Activated CD4-positive, alpha-beta T cell treated with anti-CD3 and anti-CD28 coated beads, Interleukin-2, amount 10 ng/mL, durations not matched to agents 24 days and 14 days (primary cell): ENCODE measurements at regions of chr6 and their contacts with region 1.

Region 1: DNA sequence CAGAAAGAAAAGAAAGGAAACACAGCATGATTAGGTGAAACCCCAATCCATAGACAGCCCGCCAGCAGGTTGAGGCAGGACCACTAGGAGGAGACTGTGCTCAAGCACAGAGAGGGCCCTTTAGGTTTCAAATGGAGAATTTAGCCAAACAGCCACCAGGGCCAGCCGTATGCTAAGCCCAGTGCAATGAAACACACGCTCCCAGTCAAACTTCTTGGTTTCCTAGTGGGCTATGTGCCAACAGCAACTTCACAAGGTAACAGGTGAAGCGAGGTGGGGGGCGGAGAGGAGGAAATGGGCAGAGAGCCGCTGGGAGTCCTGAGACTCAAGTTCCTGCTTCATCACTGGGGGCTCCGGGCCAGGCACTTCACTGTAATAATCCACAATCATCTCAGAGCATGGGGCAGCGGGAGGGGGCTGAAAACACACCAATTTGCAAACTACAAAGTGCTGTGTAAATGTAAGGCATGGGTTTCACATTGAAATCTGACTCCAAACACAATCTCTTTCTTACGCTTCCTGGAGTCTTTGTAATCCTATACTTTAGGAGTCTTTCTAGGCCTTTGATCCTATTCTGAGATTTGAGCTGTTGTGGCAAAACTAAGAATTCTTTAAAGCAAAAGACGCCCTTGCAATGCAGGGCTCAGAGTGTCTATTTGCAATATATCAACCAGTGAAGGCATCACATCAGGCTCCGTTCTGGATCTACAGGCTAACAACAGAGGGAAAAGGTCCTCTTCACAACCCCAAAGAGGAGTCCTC is 117.3 kb downstream of the OPRM1 start:
- DNase-seq: peak; percentile 85
- H3K4me3 Mint-ChIP-seq: peak overlapping the region; percentile 67
- H3K27ac Mint-ChIP-seq: peak overlapping the region; percentile 65
- H3K4me1 Mint-ChIP-seq: peaks cover 25% of the 10 kb centered on the region
- H3K27me3 Mint-ChIP-seq: no peaks in the 10 kb centered on the region

Region 2: DNA sequence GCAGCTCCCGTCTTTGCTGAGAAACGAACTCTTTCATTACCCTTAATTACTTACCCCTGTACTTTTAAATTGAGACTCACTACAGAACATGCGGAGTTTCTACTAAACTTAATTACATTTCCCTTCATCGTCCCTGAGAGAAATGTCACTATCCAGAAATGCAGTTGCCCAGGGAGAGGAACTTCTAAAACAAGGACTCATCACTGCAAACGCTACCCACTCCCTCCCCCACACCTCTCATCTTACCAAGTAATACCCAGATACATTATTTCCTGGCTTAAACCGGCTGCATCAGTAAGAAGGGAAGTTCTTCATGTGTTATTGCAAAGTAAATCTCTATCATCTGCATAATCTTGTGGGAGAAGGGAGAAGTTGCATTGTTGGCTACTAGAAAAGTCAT is 62.0 kb after region 1 on chr6:
- intact Hi-C with region 1: no loop called
- DNase-seq: no peak
- H3K4me3 Mint-ChIP-seq: no peak overlapping the region
- H3K27ac Mint-ChIP-seq: no peak overlapping the region
- H3K4me1 Mint-ChIP-seq: peaks cover 15% of the 10 kb centered on the region
- H3K27me3 Mint-ChIP-seq: peaks cover 4% of the 10 kb centered on the region

Region 3: GRCh38 chr6:154352898-154353585 is 196.7 kb after region 1 on chr6:
- intact Hi-C with region 1: loop called (anchors 5 kb)
- DNase-seq: no peak
- H3K4me3 Mint-ChIP-seq: no peak overlapping the region
- H3K27ac Mint-ChIP-seq: no peak overlapping the region
- H3K4me1 Mint-ChIP-seq: peaks cover 14% of the 10 kb centered on the region
- H3K27me3 Mint-ChIP-seq: peaks cover 33% of the 10 kb centered on the region

Region 4: GRCh38 chr6:154410619-154411072 is 254.3 kb after region 1 on chr6:
- intact Hi-C with region 1: loop called (anchors 2 kb)
- DNase-seq: no peak
- H3K4me3 Mint-ChIP-seq: no peak overlapping the region
- H3K27ac Mint-ChIP-seq: no peak overlapping the region
- H3K4me1 Mint-ChIP-seq: peaks cover 1% of the 10 kb centered on the region
- H3K27me3 Mint-ChIP-seq: peaks cover 4% of the 10 kb centered on the region

Region 5: DNA sequence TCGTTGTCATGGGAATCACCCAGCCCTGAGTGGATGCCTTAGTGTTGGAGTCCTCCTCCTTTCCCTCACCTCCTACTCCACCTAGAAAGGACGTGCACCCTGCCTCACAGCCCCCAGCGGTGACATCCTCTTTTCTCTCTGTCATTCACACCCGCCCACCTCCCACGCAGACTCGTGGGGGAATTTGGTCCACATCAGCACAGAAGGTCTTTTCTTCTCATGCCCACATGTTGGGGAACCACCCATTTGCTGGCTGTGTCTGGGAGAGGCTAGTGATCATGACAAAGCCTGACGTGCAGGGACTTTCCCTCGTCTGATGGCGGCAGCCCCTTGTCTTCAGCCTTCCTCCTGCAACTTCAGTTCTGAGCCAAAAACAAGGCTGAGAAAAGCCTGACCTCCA is 450.1 kb after region 1 on chr6:
- intact Hi-C with region 1: loop called (anchors 2 kb)
- DNase-seq: peak; percentile 86
- H3K4me3 Mint-ChIP-seq: peak overlapping the region; percentile 57
- H3K27ac Mint-ChIP-seq: peak overlapping the region; percentile 82
- H3K4me1 Mint-ChIP-seq: peaks cover 34% of the 10 kb centered on the region
- H3K27me3 Mint-ChIP-seq: no peaks in the 10 kb centered on the region

Region 6: GRCh38 chr6:154805288-154805911 is 649.1 kb after region 1 on chr6:
- intact Hi-C with region 1: loop called (anchors 10 kb)
- DNase-seq: no peak
- H3K4me3 Mint-ChIP-seq: no peak overlapping the region
- H3K27ac Mint-ChIP-seq: no peak overlapping the region
- H3K4me1 Mint-ChIP-seq: peaks cover 4% of the 10 kb centered on the region
- H3K27me3 Mint-ChIP-seq: no peaks in the 10 kb centered on the region